AG04450 (cell line): ENCODE measurements at regions of chr20 and their contacts with region 1.

Region 1: DNA sequence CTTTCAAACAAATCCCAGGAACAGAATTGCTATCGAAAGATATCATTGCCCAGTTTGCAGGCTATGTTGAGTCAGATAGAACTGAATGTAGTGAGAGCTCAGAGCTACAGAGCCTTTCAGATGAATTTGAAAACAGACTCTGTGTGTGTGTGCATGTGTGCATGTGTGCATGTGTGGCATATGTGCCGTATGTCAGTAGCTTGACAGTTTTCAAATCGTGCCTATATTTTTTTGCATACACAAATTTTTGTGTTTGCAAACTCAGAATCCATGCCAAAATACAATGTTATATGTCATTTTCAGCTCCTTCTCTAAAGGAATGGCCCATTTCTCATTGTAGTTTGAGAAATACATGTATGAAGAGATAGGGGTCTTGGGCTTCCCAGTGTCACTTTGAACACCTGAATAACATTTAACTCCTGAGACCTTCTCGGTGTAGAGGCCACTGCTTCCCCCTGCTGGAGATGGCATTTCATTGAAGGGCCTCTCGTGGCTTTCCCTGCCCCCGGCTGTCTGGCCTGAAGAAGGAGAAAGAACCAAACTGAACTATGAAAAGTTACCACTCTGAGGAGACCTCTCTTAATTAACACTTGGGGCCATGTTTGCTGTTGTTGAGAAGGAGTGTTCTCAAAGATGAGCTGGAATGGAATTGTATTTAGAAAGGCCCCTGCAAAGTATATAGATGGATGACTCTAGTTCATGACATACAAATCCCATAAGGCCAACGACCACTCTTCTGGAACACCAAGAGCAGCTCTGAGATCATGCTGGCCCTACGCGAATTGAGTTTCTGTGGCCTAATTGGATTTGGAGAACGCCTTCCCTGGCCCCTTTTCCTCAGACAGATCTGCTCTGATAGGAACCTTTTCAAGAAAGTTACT is 58.7 kb downstream of the VAPB start:
- DNase-seq: peak; percentile 20
- H3K4me3 ChIP-seq: no peak overlapping the region
- H3K27ac ChIP-seq: no peak overlapping the region
- H3K27me3 ChIP-seq: no peaks in the 10 kb centered on the region
- CTCF ChIP-seq: peak; percentile 84

Region 2: GRCh38 chr20:58236612-58237330 is 211.0 kb before region 1 on chr20:
- CTCF ChIA-PET with region 1: interaction called, 68 read pairs
- POLR2A ChIA-PET with region 1: no interaction called
- DNase-seq: no peak
- H3K4me3 ChIP-seq: peak overlapping the region; percentile 56
- H3K27ac ChIP-seq: no peak overlapping the region
- H3K27me3 ChIP-seq: no peaks in the 10 kb centered on the region
- CTCF ChIP-seq: peak; percentile 95

Region 3: DNA sequence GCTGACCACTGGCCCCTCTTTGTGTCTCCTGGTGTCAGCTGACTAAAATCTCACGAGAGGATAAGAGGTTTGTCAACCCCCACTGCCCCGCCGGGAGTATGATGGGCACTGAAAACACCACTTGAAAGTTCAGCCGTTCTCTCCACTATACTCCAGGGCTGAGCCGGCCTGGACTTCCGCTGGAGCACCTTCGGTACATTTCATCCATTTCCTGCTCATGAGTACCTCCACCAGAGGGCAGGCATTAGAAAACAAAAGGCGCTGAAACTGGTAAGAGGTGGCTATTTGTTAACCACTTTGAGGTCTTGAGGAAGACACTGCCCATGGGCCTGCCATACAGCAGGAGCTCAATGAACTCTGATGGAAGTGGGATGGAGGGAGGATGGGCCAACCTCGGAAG is 201.4 kb before region 1 on chr20:
- CTCF ChIA-PET with region 1: interaction called, 14 read pairs
- POLR2A ChIA-PET with region 1: no interaction called
- DNase-seq: no peak
- H3K4me3 ChIP-seq: no peak overlapping the region
- H3K27ac ChIP-seq: no peak overlapping the region
- H3K27me3 ChIP-seq: no peaks in the 10 kb centered on the region
- CTCF ChIP-seq: peak; percentile 43

Region 4: DNA sequence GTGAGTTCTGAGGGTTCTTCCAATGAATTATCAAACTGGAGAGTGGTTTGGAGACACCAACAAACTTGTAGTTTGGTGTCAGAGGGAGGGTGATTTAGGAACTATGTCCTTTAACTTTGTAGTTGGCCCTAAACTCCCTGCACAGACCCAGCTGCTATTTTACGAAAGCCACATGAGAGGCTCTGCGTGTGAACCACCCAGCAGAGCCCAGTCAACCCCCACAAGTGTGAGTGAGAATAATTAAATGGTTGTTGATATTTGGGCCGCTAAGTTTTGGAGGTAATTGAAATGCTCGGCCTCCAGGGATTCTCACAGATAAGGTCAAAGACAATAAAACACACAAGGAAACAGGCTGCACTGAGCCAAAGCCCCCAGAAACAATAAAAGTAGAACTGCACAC is 65.7 kb before region 1 on chr20:
- CTCF ChIA-PET with region 1: no interaction called
- POLR2A ChIA-PET with region 1: no interaction called
- DNase-seq: no peak
- H3K4me3 ChIP-seq: no peak overlapping the region
- H3K27ac ChIP-seq: no peak overlapping the region
- H3K27me3 ChIP-seq: peaks cover 3% of the 10 kb centered on the region
- CTCF ChIP-seq: no peak

Region 5: GRCh38 chr20:58424198-58424969 is 23.4 kb before region 1 on chr20:
- CTCF ChIA-PET with region 1: interaction called, 10 read pairs
- POLR2A ChIA-PET with region 1: no interaction called
- DNase-seq: no peak
- H3K4me3 ChIP-seq: no peak overlapping the region
- H3K27ac ChIP-seq: no peak overlapping the region
- H3K27me3 ChIP-seq: no peaks in the 10 kb centered on the region
- CTCF ChIP-seq: no peak

Region 6: GRCh38 chr20:58433764-58434163 is 14.0 kb before region 1 on chr20:
- CTCF ChIA-PET with region 1: interaction called, 31 read pairs
- POLR2A ChIA-PET with region 1: interaction called, 3 read pairs
- DNase-seq: peak; percentile 72
- H3K4me3 ChIP-seq: no peak overlapping the region
- H3K27ac ChIP-seq: peak overlapping the region; percentile 12
- H3K27me3 ChIP-seq: no peaks in the 10 kb centered on the region
- CTCF ChIP-seq: no peak

Region 7: GRCh38 chr20:58458180-58459057 is 10.7 kb after region 1 on chr20:
- CTCF ChIA-PET with region 1: interaction called, 20 read pairs
- POLR2A ChIA-PET with region 1: interaction called, 3 read pairs
- DNase-seq: no peak
- H3K4me3 ChIP-seq: no peak overlapping the region
- H3K27ac ChIP-seq: no peak overlapping the region
- H3K27me3 ChIP-seq: no peaks in the 10 kb centered on the region
- CTCF ChIP-seq: no peak